PC-3 (cell line): ENCODE measurements at regions of chrX and their contacts with region 1.

Region 1: GRCh38 chrX:88425739-88426138 is 321.3 kb upstream of the CPXCR1 start:
- DNase-seq: peak; percentile 53
- ATAC-seq: peak; percentile 58
- H3K4me3 ChIP-seq: peak overlapping the region; percentile 71
- H3K27ac ChIP-seq: peak overlapping the region; percentile 30; the same call in 1 of the 2 replicates
- H3K4me1 ChIP-seq: no peaks in the 10 kb centered on the region
- H3K27me3 ChIP-seq: no peaks in the 10 kb centered on the region
- CTCF ChIP-seq: peak; percentile 68

Region 2: DNA sequence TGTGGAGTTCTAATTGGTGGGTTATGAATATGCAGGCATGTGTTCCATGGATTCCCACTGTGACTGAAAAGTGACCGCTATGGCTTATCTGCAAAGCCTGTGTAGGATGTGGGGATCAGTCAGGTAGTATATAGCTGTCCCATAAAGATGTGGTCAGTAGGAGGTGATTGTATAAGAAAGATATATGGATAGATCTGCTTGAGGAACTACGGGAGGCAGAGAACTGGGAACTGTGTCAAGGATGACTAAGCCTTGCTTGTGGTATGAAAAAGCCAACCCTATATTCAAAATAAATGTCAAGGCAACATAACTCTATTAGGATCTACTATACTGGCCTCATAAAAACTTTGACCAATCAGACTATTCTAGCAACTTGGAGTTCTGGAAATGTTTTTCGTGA is 722.9 kb before region 1 on chrX:
- CTCF ChIA-PET with region 1: no interaction called
- POLR2A ChIA-PET with region 1: no interaction called
- intact Hi-C with region 1: loop called (anchors 10 kb)
- DNase-seq: peak; percentile 68
- ATAC-seq: peak; percentile 84
- H3K4me3 ChIP-seq: no peak overlapping the region
- H3K27ac ChIP-seq: no peak overlapping the region
- H3K4me1 ChIP-seq: peaks cover 11% of the 10 kb centered on the region
- H3K27me3 ChIP-seq: no peaks in the 10 kb centered on the region
- CTCF ChIP-seq: no peak

Region 3: DNA sequence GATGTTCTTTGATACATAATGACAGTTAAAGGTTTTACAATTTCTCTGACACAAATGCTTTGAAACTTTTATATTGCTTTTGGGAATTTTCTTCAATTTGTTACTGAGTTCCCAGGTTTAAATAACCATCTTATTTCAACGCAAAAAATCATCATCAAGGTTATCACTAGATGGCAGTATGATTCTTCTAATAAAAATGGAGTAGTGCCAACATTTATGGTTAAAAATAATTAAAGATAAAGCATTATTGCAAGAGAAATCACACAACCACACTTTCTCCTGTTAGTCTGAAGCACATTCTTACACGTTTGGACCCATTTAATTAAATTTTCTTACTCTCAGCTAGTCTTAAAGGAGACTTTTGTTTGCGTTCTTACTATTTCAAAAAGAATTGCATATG is 290.0 kb before region 1 on chrX:
- CTCF ChIA-PET with region 1: no interaction called
- POLR2A ChIA-PET with region 1: no interaction called
- intact Hi-C with region 1: loop called (anchors 5 kb)
- DNase-seq: peak; percentile 35
- ATAC-seq: no peak
- H3K4me3 ChIP-seq: no peak overlapping the region
- H3K27ac ChIP-seq: no peak overlapping the region
- H3K4me1 ChIP-seq: no peaks in the 10 kb centered on the region
- H3K27me3 ChIP-seq: no peaks in the 10 kb centered on the region
- CTCF ChIP-seq: peak; percentile 62

Region 4: DNA sequence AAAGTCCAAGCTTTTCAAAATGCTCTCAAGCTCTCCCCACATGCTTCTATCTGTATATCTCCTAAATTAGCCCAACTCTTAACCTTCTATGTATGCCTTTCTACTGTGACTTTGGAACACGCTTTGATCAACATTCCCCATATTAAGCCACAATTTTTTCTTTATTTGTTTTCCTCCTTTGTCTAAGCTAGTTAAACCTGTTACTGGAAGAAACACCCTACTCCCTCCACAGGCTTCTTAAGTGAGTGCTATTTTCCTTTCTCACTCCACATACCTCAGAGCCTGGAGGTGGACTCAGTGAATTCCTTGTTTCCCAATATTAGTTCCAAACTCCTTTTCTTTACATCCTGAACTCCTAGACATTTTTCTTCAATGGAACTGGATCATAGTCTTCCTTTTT is 17.5 kb after region 1 on chrX:
- CTCF ChIA-PET with region 1: no interaction called
- POLR2A ChIA-PET with region 1: no interaction called
- intact Hi-C with region 1: no loop called
- DNase-seq: no peak
- ATAC-seq: no peak
- H3K4me3 ChIP-seq: no peak overlapping the region
- H3K27ac ChIP-seq: no peak overlapping the region
- H3K4me1 ChIP-seq: no peaks in the 10 kb centered on the region
- H3K27me3 ChIP-seq: no peaks in the 10 kb centered on the region
- CTCF ChIP-seq: no peak

Region 5: DNA sequence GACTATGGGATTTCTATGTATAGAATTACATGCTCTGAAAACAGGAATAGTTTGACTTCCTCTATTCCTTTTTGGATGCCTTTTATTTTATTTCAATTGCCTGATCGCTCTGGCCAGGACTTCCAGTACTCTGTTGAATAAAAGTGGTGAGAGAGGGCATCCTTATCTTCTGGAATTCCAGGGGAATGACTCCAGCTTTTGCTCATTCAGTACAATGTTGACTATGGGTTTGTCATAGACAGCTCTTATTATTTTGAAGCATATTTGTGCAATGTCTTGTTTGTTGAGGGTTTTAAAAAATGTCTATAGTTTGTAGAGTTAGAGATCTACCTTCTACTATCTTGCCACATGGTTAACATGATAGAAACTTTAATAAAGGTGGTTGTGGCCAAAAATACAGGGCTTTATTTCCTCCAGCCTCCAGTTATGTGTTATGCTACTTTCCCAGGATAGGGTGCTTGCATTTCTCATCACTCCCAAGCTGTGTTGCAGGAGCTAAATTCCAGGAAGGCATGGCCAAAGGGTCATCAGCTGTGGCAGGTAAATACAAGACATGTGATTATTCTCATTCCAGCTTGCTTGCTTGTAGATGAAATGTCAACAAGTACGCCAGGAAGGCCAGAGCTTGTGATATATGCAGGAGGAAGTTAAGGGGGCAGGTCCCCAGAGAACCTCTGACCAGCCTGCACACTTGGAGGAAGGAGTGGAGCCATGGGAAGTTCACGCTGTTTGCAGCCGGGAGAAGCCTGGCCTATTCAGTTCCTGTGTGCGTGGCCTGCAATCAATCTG is 178.9 kb after region 1 on chrX:
- CTCF ChIA-PET with region 1: no interaction called
- POLR2A ChIA-PET with region 1: no interaction called
- intact Hi-C with region 1: loop called (anchors 2 kb)
- DNase-seq: peak; percentile 77
- ATAC-seq: peak; percentile 85
- H3K4me3 ChIP-seq: peak overlapping the region; percentile 41; the same call in 1 of the 2 replicates
- H3K27ac ChIP-seq: peak overlapping the region; percentile 97
- H3K4me1 ChIP-seq: peaks cover 30% of the 10 kb centered on the region
- H3K27me3 ChIP-seq: no peaks in the 10 kb centered on the region
- CTCF ChIP-seq: no peak

Region 6: GRCh38 chrX:88613338-88613737 is 187.6 kb after region 1 on chrX:
- CTCF ChIA-PET with region 1: no interaction called
- POLR2A ChIA-PET with region 1: no interaction called
- intact Hi-C with region 1: loop called (anchors 1 kb)
- DNase-seq: peak; percentile 45
- ATAC-seq: peak; percentile 72
- H3K4me3 ChIP-seq: 0 out of 2 replicates have a peak overlapping the region, but pooled peaks have one; percentile 31
- H3K27ac ChIP-seq: no peak overlapping the region
- H3K4me1 ChIP-seq: no peaks in the 10 kb centered on the region
- H3K27me3 ChIP-seq: no peaks in the 10 kb centered on the region
- CTCF ChIP-seq: peak; percentile 72